ENCODE measurements at regions of chr3 and their contacts with region 1.

Region 1: GRCh38 chr3:196073188-196073838 is 8.6 kb downstream of the TFRC start:
- DNase-seq: peak; percentile 42 to 62 (median 60)
- ATAC-seq: peak; percentile 94
- H3K4me3 ChIP-seq: no peak overlapping the region
- H3K27ac ChIP-seq: no peak overlapping the region
- H3K4me1 ChIP-seq: no peaks in the 10 kb centered on the region
- H3K27me3 ChIP-seq: no peaks in the 10 kb centered on the region

Region 2: GRCh38 chr3:196198771-196199753 is 125.7 kb after region 1 on chr3:
- intact Hi-C with region 1: loop called (anchors 2 to 5 kb)
- DNase-seq: peak in 1 of 3 donors; percentile 25
- ATAC-seq: no peak
- H3K4me3 ChIP-seq: no peak overlapping the region
- H3K27ac ChIP-seq: no peak overlapping the region
- H3K4me1 ChIP-seq: peaks cover 2% of the 10 kb centered on the region
- H3K27me3 ChIP-seq: no peaks in the 10 kb centered on the region

Region 3: GRCh38 chr3:196499061-196499460 is 425.7 kb after region 1 on chr3:
- intact Hi-C with region 1: loop called in 1 of 4 experiments (anchors 10 kb)
- DNase-seq: no peak
- ATAC-seq: no peak
- H3K4me3 ChIP-seq: no peak overlapping the region
- H3K27ac ChIP-seq: peak overlapping the region; percentile 48
- H3K4me1 ChIP-seq: peaks cover 7% of the 10 kb centered on the region
- H3K27me3 ChIP-seq: no peaks in the 10 kb centered on the region